ENCODE measurements at regions of chr13 and their contacts with region 1.

Region 1: DNA sequence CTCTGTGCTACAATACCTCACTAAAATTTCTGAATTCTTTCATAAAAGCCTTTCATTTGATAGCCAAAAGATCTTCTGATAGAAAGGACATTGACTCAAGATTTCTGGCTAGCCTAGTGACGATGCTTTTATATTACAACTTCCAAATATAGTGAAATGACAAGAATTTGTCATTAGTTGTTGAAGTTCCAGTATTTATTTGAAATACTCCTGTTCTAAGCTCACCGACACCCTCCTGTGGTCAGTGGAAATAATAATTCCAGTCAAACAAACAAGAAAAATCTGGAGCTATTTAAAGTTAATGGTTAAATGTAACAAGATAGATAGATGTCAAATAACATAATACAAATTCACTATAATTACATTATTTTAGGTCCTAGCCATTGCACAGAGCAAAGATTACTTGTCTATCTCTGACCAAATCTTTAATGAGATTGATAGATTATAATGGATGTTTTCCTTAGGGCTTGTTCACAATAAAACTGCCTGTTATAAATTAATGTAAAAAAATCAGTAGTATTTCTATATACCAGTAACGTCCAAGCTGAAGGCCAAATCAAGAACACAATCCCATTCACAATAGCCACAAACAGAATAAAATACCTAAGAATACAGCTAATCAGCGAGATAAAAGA is 195.5 kb downstream of the RGCC start:
- DNase-seq: peak; percentile 55
- ATAC-seq: no peak
- H3K4me3 Mint-ChIP-seq: no peak overlapping the region
- H3K27ac Mint-ChIP-seq: no peak overlapping the region
- H3K4me1 Mint-ChIP-seq: peaks cover 15% of the 10 kb centered on the region
- H3K27me3 Mint-ChIP-seq: no peaks in the 10 kb centered on the region
- CTCF ChIP-seq: peak; percentile 60

Region 2: GRCh38 chr13:41384755-41385503 is 267.9 kb before region 1 on chr13:
- CTCF ChIA-PET with region 1: interaction called, 6 read pairs
- POLR2A ChIA-PET with region 1: no interaction called
- intact Hi-C with region 1: loop called (anchors 10 kb)
- DNase-seq: no peak
- ATAC-seq: no peak
- H3K4me3 Mint-ChIP-seq: no peak overlapping the region
- H3K27ac Mint-ChIP-seq: no peak overlapping the region
- H3K4me1 Mint-ChIP-seq: peaks cover 13% of the 10 kb centered on the region
- H3K27me3 Mint-ChIP-seq: no peaks in the 10 kb centered on the region
- CTCF ChIP-seq: peak; percentile 56

Measured in activated CD8-positive, alpha-beta T cell treated with anti-CD3 and anti-CD28 coated beads for 36 hours (primary cell).